Activated CD4-positive, alpha-beta memory T cell treated with anti-CD3 and anti-CD28 coated beads, Interleukin-2, amount 10 ng/mL, durations not matched to agents 7 days and 5 days (primary cell): ENCODE measurements at regions of chr19 and their contacts with region 1.

Region 1: DNA sequence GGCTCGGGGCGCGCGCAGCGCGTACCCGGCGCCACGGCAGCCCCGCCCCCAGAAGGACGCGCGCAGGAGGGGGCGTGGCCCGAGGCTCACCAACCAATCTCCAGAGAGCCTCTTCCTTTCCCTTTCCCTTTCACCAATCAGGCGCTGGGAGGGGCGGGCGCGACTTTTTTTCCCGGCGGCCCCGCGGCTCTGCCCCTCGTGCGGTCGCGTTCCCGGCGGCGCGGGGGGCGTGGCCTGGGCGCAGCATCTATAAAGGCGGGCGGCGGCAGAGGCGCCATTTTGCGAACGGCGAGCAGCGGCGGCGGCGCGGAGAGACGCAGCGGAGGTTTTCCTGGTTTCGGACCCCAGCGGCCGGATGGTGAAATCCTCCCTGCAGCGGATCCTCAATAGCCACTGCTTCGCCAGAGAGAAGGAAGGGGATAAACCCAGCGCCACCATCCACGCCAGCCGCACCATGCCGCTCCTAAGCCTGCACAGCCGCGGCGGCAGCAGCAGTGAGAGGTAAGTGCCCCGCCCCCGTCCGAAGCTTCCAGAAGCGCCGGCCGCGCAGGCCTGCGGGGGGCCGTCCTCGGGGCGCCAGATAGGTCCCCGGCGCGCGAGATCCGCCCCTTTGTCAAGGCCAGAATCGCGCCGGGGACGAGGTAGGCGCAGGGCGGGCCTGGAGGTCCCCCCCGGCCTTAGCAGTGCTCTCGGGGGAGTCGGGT is 12.6 kb downstream of the PEAK3 start:
- DNase-seq: peak; percentile 99
- H3K4me3 Mint-ChIP-seq: peak overlapping the region; percentile 90
- H3K27ac Mint-ChIP-seq: peak overlapping the region; percentile 83
- H3K4me1 Mint-ChIP-seq: peaks cover 40% of the 10 kb centered on the region
- H3K27me3 Mint-ChIP-seq: no peaks in the 10 kb centered on the region

Region 2: DNA sequence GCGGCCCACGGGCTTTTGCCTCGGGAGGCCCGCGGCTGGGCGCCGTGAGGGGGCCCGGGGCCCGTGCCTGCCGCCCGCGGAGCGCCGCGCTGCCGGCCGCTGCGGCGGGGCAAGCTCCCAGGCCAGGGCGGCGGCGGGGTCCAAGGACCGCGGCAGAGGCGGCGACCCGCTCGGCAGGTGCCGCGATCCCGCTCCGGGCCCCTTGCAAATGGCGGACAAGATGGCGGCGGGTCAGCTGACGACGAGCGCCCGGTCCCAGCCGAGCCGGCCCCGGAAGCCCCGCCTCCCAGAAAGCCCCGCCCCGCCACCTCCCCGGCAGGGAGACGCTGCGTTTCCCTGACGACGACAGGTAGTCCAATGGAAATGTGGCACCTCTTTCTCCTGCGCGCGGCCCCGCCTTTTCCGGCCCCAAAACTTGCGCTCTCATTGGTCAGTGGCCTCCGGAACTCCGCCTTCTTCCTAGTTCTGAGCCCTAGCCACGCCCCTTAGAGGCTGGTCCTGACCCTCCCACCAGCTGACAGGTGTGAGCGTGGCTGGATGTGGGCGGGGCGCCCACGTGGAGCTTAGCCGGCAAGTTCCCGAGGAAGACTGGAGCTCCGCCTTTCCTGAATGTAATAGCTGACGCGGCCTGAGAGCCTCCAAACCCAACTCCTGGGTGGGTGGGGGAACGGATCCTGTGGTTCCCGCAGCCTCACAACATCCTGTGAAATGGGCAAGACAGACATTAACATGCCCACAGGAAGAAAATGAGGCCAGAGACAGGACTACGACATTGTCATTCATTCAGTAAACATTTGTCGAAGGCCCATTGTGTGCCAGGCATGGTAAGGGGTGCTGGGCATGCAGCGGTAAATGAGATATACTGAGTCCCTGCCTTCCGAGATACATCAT is 117.8 kb before region 1 on chr19 and contains the start of gene AP3D1:
- CTCF ChIA-PET with region 1: interaction called, 11 read pairs
- POLR2A ChIA-PET with region 1: interaction called, 4 read pairs
- DNase-seq: peak; percentile 100
- H3K4me3 Mint-ChIP-seq: peak within 1 kb of the TSS; percentile 72
- H3K27ac Mint-ChIP-seq: peak within 1 kb of the TSS; percentile 73
- H3K4me1 Mint-ChIP-seq: peaks cover 54% of the 10 kb centered on the region
- H3K27me3 Mint-ChIP-seq: no peaks in the 10 kb centered on the region
- total RNA-seq, gene AP3D1: 104 to 105 TPM

Region 3: GRCh38 chr19:2171349-2172145 is 97.8 kb before region 1 on chr19:
- CTCF ChIA-PET with region 1: no interaction called
- POLR2A ChIA-PET with region 1: no interaction called
- DNase-seq: peak; percentile 73
- H3K4me3 Mint-ChIP-seq: no peak overlapping the region
- H3K27ac Mint-ChIP-seq: peak overlapping the region; percentile 40
- H3K4me1 Mint-ChIP-seq: peaks cover 60% of the 10 kb centered on the region
- H3K27me3 Mint-ChIP-seq: no peaks in the 10 kb centered on the region

Region 4: DNA sequence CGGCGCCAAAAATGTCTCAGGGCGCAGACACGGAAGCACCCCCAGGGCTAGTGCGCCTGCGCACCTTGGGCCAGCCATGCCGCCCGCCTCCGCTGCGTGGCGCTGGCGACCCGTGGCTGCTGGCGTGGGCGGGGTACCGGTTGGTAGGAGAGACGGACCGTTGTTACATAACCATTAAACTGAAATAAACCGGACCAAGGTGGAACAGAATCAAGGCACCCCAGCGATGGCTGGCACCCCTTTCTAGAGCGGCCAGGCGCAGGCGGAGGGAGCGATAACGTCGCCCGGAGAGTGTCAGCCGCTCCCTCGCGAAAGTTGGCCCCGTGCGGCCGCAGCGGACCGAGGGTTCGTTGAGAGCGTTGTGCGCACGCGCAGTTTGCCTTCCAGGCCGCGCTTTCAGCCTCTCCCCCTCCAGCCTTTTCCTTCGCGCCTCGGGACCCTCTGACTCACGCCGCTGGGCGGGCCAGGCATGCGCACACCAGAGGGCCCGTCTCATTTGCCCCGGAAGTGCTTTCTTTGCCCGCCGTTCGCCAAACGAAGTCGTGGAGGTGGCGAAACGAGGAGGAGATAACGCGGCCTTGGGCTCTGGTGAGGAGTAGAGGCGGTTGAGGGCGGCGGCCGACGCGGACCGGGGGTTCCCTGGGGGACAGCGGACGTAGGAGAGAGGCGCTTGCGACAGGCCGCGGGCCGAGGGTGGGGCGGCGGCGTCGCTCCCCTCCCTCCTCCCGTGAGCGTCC is 32.9 kb before region 1 on chr19 and contains the starts of genes PLEKHJ1 and SF3A2:
- CTCF ChIA-PET with region 1: interaction called, 14 read pairs
- POLR2A ChIA-PET with region 1: interaction called, 114 read pairs
- DNase-seq: peak; percentile 98
- H3K4me3 Mint-ChIP-seq: peak within 1 kb of the TSS; percentile 94
- H3K27ac Mint-ChIP-seq: peak within 1 kb of the TSS; percentile 96
- H3K4me1 Mint-ChIP-seq: peaks cover 68% of the 10 kb centered on the region
- H3K27me3 Mint-ChIP-seq: no peaks in the 10 kb centered on the region
- total RNA-seq, gene PLEKHJ1: 58.3 to 60.4 TPM
- total RNA-seq, gene SF3A2: 137 to 145 TPM

Region 5: GRCh38 chr19:2253106-2254053 is 16.0 kb before region 1 on chr19:
- CTCF ChIA-PET with region 1: interaction called, 5 read pairs
- POLR2A ChIA-PET with region 1: interaction called, 76 read pairs
- DNase-seq: peak; percentile 44
- H3K4me3 Mint-ChIP-seq: no peak overlapping the region
- H3K27ac Mint-ChIP-seq: no peak overlapping the region
- H3K4me1 Mint-ChIP-seq: peaks cover 23% of the 10 kb centered on the region
- H3K27me3 Mint-ChIP-seq: peaks cover 30% of the 10 kb centered on the region

Region 6: DNA sequence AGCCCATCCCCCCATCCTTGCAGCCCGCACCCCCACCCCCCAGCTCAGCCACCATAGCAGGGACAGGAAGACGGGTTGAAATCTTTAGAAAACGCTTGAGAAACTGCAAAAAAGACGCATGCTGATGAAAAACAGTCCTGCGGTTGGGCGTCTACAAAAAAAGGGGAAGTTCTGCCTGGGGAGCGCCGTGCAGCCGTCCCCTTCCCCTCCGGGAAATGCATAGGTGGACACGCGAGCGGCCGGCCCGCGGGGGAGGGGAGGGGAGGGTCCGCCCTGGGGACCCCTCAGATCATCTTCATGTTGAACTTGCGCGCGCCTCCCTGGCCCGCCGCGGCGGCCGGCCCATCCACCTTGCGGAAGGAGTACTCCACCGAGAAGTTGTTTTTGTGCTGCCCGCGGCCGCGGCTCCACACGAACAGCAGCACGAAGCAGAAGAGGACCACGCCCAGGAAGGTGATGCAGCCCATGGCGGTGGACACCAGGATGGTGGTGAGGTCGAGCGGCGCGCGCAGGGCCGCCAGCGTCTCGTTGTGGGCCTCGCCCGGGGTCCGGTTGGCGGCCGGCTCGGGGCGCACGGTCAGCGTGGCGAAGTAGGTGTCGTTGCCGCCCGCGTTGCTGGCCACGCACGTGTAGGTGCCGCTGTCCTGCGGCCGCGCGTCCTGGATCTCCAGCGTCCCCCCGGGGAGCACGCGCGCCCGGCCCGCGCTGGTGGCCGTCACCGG is 20.5 kb after region 1 on chr19:
- CTCF ChIA-PET with region 1: interaction called, 8 read pairs
- POLR2A ChIA-PET with region 1: interaction called, 17 read pairs
- DNase-seq: peak; percentile 81
- H3K4me3 Mint-ChIP-seq: peak overlapping the region; percentile 83
- H3K27ac Mint-ChIP-seq: peak overlapping the region; percentile 94
- H3K4me1 Mint-ChIP-seq: peaks cover 31% of the 10 kb centered on the region
- H3K27me3 Mint-ChIP-seq: peaks cover 4% of the 10 kb centered on the region

Region 7: GRCh38 chr19:2328401-2329148 is 59.2 kb after region 1 on chr19 and contains the starts of genes LSM7 and SPPL2B:
- CTCF ChIA-PET with region 1: interaction called, 4 read pairs
- POLR2A ChIA-PET with region 1: interaction called, 16 read pairs
- DNase-seq: peak; percentile 93
- H3K4me3 Mint-ChIP-seq: peak within 1 kb of the TSS; percentile 98
- H3K27ac Mint-ChIP-seq: peak within 1 kb of the TSS; percentile 99
- H3K4me1 Mint-ChIP-seq: peaks cover 63% of the 10 kb centered on the region
- H3K27me3 Mint-ChIP-seq: no peaks in the 10 kb centered on the region
- total RNA-seq, gene LSM7: 110 to 115 TPM
- total RNA-seq, gene SPPL2B: 58.9 to 68.2 TPM